H1 (cell line): ENCODE measurements at regions of chr14 and their contacts with region 1.

Region 1: GRCh38 chr14:70821584-70822529 is 12.5 kb upstream of the MAP3K9 start:
- DNase-seq: peak in 1 of 2 experiments; percentile 82
- H3K4me3 ChIP-seq: peak overlapping the region; percentile 76 to 88 (median 81)
- H3K27ac ChIP-seq: 0 out of 2 replicates have a peak overlapping the region, but pooled peaks have one; percentile 27
- H3K4me1 ChIP-seq: peaks cover 2 to 11% (median 7%) of the 10 kb centered on the region in 4 experiments; a peak in 5 of 7 replicates
- H3K27me3 ChIP-seq: peaks cover 1 to 8% (median 6%) of the 10 kb centered on the region in 4 experiments; a peak in 5 of 7 replicates
- CTCF ChIP-seq: peak in 1 of 3 experiments; percentile 8; a peak in 1 of 4 replicates
- EP300 ChIP-seq: no peak
- POLR2A ChIP-seq: no peak
- RAD21 ChIP-seq: no peak

Region 2: GRCh38 chr14:70052990-70053389 is 768.9 kb before region 1 on chr14:
- CTCF ChIA-PET with region 1: no interaction called
- POLR2A ChIA-PET with region 1: no interaction called
- DNase-seq: peak in 1 of 2 experiments; percentile 72
- H3K4me3 ChIP-seq: no peak overlapping the region
- H3K27ac ChIP-seq: no peak overlapping the region
- H3K4me1 ChIP-seq: no peaks in the 10 kb centered on the region
- H3K27me3 ChIP-seq: no peaks in the 10 kb centered on the region
- CTCF ChIP-seq: no peak
- EP300 ChIP-seq: no peak
- POLR2A ChIP-seq: no peak
- RAD21 ChIP-seq: no peak

Region 3: GRCh38 chr14:70759398-70759797 is 62.5 kb before region 1 on chr14:
- CTCF ChIA-PET with region 1: interaction called, 14 read pairs
- POLR2A ChIA-PET with region 1: no interaction called
- DNase-seq: no peak
- H3K4me3 ChIP-seq: no peak overlapping the region
- H3K27ac ChIP-seq: no peak overlapping the region
- H3K4me1 ChIP-seq: no peaks in the 10 kb centered on the region
- H3K27me3 ChIP-seq: no peaks in the 10 kb centered on the region
- CTCF ChIP-seq: no peak
- EP300 ChIP-seq: no peak
- POLR2A ChIP-seq: no peak
- RAD21 ChIP-seq: no peak

Region 4: DNA sequence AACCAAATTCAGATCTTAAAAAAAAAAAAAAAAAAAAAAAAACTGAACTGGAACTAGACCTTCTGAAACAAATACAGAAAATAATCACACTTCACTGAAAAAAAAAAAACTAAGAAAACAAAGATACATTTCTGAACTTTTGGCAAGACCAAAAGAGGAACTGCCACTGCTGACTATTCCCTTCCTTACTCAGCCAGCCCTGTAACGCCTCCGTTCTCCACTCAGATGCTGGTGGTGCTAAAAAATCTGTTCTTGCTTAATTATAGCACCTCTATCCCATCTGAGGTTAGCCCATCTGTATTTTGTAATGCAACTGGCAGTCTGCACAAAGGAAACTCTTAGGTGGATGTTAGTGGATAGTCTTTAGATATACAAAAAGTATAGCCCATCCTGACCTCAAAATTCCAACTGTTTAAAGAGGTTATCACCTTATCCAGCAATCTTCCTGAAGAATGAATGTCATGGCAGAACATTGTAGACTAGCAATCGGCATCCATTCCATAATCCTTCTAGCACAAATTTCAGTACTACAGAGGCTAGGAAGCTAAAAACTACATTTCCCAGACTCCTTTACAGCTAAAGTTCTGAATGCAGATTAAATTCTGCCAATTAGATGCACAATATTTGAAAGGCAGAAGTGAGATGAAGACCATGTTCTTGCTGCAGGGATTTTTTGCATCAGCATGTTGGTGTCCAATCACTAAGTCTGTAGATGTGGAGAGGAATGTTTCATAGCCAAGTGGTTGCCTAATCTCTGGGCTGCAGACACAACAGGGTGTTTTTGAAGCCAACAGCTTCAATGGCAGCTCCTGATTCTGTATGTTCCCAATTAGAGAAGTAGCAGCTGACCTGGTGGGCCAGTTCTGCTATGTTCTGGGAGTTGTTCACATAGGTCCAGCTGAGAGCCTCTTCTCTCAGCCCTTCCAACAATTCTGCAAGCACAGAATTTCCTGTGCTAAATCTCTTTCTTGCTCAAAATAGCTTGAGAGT is 18.2 kb before region 1 on chr14:
- CTCF ChIA-PET with region 1: interaction called, 19 read pairs
- POLR2A ChIA-PET with region 1: interaction called, 57 read pairs
- DNase-seq: no peak
- H3K4me3 ChIP-seq: no peak overlapping the region
- H3K27ac ChIP-seq: no peak overlapping the region
- H3K4me1 ChIP-seq: no peaks in the 10 kb centered on the region
- H3K27me3 ChIP-seq: no peaks in the 10 kb centered on the region
- CTCF ChIP-seq: no peak
- EP300 ChIP-seq: no peak
- POLR2A ChIP-seq: no peak
- RAD21 ChIP-seq: no peak

Region 5: GRCh38 chr14:70832536-70833305 is 10.9 kb after region 1 on chr14:
- CTCF ChIA-PET with region 1: interaction called, 10 read pairs
- POLR2A ChIA-PET with region 1: interaction called, 4 read pairs
- DNase-seq: no peak
- H3K4me3 ChIP-seq: no peak overlapping the region
- H3K27ac ChIP-seq: no peak overlapping the region
- H3K4me1 ChIP-seq: no peaks in the 10 kb centered on the region
- H3K27me3 ChIP-seq: no peaks in the 10 kb centered on the region
- CTCF ChIP-seq: no peak
- EP300 ChIP-seq: no peak
- POLR2A ChIP-seq: no peak
- RAD21 ChIP-seq: no peak

Region 6: DNA sequence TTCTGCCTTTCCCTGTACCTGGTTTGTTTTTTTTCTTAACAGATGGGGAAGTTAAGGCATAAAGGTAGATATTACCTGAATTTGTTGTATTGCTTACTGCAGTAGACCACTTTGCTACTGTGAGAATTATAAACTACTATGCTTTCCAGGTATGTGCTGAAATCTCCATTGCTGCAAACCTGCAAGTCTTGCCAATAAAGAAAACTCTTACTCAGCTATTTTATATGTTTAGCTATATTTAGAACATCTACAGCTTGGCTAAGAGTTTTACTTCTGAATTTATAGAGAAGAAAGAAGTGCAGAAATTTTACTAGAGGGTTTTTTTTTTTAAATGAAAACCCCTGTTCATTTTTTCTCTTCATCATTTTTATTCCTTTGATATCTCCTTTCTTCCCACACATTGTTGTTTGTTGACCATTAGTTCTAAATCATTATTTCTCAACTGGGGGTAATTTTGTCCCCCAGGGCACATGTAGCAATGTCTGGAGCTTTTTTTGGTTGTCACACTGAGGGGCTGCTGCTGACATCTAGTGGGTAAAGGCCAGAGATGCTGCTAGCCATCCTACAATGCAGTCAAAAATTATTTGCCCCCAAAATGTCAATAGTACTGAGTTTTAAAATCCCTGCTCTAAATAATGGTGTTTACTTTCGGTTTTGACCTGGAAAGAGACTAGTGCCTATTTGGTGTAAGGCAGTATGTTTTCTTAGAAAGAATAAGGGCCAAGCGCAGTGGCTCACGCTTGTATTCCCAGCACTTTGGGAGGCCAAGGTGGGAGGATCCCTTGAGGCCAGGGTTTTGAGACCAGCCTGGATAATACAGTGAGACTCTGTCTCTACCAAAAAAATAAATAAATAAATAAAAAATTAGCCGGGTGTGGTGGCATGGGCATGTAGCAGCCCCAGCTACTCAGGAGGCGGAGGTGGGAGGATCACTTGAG is 134.0 kb after region 1 on chr14:
- CTCF ChIA-PET with region 1: interaction called, 19 read pairs
- POLR2A ChIA-PET with region 1: no interaction called
- DNase-seq: no peak
- H3K4me3 ChIP-seq: no peak overlapping the region
- H3K27ac ChIP-seq: no peak overlapping the region
- H3K4me1 ChIP-seq: no peaks in the 10 kb centered on the region
- H3K27me3 ChIP-seq: no peaks in the 10 kb centered on the region
- CTCF ChIP-seq: peak; percentile 27 to 63 (median 60)
- EP300 ChIP-seq: no peak
- POLR2A ChIP-seq: no peak
- RAD21 ChIP-seq: peak; percentile 77 to 79